T-cell (primary cell): ENCODE measurements at regions of chr3 and their contacts with region 1.

Region 1: DNA sequence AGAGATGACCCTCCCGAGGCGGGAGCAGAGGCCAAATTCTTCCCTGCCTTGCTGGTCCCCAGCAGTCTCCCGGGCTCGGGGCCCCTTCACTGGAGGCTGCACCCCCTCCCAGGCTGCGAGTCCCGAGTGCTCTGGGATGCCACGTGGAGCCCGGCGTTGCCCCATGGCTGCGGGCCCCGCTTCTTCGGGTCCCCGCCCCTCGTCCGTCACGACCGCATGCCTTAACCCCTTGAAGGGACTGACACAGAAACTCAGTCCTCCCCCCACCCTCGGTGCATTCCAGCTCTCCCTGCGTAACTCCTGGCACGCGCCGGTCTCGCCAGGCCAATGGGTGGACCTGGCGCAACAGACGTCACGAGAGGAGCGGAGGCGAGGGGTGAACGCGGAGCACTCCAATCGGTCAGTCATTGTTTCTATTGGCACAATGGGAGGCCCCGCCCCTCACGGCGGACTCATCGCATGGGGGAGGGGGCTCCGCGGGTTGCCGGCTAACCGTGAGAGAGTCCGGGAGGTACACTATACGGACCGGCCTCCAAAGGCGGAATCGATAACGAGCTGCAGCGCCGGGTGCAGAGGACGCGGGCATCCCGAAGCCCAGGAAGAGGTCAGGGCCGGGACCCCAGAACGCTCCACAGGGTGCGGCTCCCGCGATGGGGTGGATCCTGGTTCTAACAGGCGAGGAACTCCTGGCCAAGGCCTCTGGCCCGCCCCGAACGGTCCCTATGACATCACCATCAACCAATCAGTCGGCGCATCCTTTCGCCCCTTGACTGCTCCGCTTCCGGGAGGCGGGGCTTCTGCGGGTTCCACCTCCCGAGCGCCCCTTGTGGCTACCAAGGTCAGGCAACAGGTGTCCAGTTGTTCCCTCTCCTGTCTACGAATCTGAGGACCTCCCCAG is 978 bp upstream of the CELSR3 start:
- DNase-seq: peak; percentile 49 to 90 (median 77)
- ATAC-seq: peak; percentile 74 to 84 (median 80)
- H3K4me3 ChIP-seq: peak overlapping the region; percentile 66 to 77
- H3K4me3 Mint-ChIP-seq: peak overlapping the region; percentile 68 to 78 (median 78)
- H3K27ac ChIP-seq: peak overlapping the region; percentile 44
- H3K27ac Mint-ChIP-seq: peak overlapping the region in 1 of 2 donors; percentile 27
- H3K4me1 ChIP-seq: peaks cover 3 to 36% of the 10 kb centered on the region in 2 experiments
- H3K4me1 Mint-ChIP-seq: peaks cover 14 to 26% (median 18%) of the 10 kb centered on the region in 3 donors
- H3K27me3 ChIP-seq: peaks cover 2 to 58% of the 10 kb centered on the region in 2 experiments
- H3K27me3 Mint-ChIP-seq: peaks cover 19 to 26% of the 10 kb centered on the region in 2 donors

Region 2: GRCh38 chr3:49333091-49333490 is 669.4 kb after region 1 on chr3:
- CTCF ChIA-PET with region 1: no interaction called
- POLR2A ChIA-PET with region 1: interaction called in 1 of 2 experiments, 12 read pairs
- DNase-seq: peak in 26 of 35 experiments; percentile 6 to 54 (median 16)
- ATAC-seq: peak; percentile 51 to 90 (median 60)
- H3K4me3 ChIP-seq: no peak overlapping the region
- H3K4me3 Mint-ChIP-seq: no peak overlapping the region
- H3K27ac ChIP-seq: peak overlapping the region; percentile 59
- H3K27ac Mint-ChIP-seq: peak overlapping the region; percentile 92 to 93
- H3K4me1 ChIP-seq: peaks cover 8 to 28% of the 10 kb centered on the region in 2 experiments
- H3K4me1 Mint-ChIP-seq: peaks cover 25 to 46% (median 41%) of the 10 kb centered on the region in 3 donors
- H3K27me3 ChIP-seq: no peaks in the 10 kb centered on the region
- H3K27me3 Mint-ChIP-seq: no peaks in the 10 kb centered on the region